ENCODE measurements at regions of chr2 and their contacts with region 1.

Region 1: GRCh38 chr2:235324324-235324723 is 169.5 kb upstream of the AGAP1 start:
- DNase-seq: no peak
- H3K4me3 ChIP-seq: no peak overlapping the region
- H3K27ac ChIP-seq: no peak overlapping the region
- H3K4me1 ChIP-seq: no peaks in the 10 kb centered on the region
- H3K27me3 ChIP-seq: peaks cover 0 to 3% of the 10 kb centered on the region in 2 donors
- CTCF ChIP-seq: no peak
- POLR2A ChIP-seq: no peak

Region 2: GRCh38 chr2:234974501-234975385 is 349.6 kb before region 1 on chr2:
- intact Hi-C with region 1: loop called (anchors 5 kb)
- DNase-seq: peak in 1 of 2 donors; percentile 42
- H3K4me3 ChIP-seq: no peak overlapping the region
- H3K27ac ChIP-seq: peak overlapping the region in 1 of 2 donors; percentile 14
- H3K4me1 ChIP-seq: peaks cover 0 to 20% of the 10 kb centered on the region in 2 donors
- H3K27me3 ChIP-seq: no peaks in the 10 kb centered on the region
- CTCF ChIP-seq: no peak
- POLR2A ChIP-seq: no peak